Right ventricle myocardium inferior (tissue), 1 donor: ENCODE measurements at regions of chr18 and their contacts with region 1.

Region 1: GRCh38 chr18:55234366-55235093 is 275.3 kb upstream of the CCDC68 start:
- DNase-seq: peak; percentile 69
- ATAC-seq: peak; percentile 92

Region 2: GRCh38 chr18:55401638-55402191 is 167.2 kb after region 1 on chr18:
- intact Hi-C with region 1: loop called (anchors 5 kb)
- DNase-seq: no peak
- ATAC-seq: peak; percentile 44

Region 3: DNA sequence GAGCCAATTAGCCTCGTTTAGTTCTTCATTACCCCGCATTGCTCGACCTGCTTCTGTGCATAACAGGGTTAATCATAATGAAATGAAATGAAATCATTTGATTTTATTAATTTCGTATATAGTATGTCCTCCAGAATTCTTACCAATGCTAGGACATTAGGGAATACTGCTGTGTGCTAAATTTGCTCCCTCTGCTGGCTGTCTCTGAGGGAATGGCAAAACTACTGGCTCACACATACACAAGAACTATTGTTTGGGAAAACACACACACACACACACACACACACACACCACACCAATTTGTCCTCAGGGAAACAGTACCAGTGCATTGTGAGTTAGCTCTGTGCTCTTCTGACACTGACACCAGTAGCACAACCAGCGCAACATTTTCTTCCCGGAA is 626.7 kb after region 1 on chr18:
- intact Hi-C with region 1: loop called (anchors 5 kb)
- DNase-seq: no peak
- ATAC-seq: no peak